Activated B cell treated with CpG ODN at 0.5 μM for 24 hours (primary cell): ENCODE measurements at regions of chr22 and their contacts with region 1.

Region 1: DNA sequence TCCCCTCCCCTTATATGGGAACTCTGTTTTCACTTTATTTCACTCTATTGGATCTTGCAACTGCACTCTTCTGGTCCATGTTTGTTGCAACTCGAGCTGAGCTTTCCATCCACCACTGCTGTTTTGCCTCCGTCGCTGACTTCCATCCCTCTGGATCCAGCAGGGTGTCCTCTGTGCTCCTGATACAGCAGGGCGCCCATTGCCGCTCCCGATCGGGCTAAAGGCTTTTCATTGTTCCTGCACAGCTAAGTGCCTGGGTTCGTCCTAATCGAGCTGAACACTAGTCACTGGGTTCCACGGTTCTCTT is 11.1 kb upstream of the CCDC117 start:
- DNase-seq: no peak
- ATAC-seq: no peak
- H3K4me3 Mint-ChIP-seq: peak overlapping the region; percentile 29
- H3K27ac Mint-ChIP-seq: no peak overlapping the region
- H3K4me1 Mint-ChIP-seq: peaks cover 21% of the 10 kb centered on the region
- H3K27me3 Mint-ChIP-seq: no peaks in the 10 kb centered on the region
- CTCF ChIP-seq: no peak

Region 2: DNA sequence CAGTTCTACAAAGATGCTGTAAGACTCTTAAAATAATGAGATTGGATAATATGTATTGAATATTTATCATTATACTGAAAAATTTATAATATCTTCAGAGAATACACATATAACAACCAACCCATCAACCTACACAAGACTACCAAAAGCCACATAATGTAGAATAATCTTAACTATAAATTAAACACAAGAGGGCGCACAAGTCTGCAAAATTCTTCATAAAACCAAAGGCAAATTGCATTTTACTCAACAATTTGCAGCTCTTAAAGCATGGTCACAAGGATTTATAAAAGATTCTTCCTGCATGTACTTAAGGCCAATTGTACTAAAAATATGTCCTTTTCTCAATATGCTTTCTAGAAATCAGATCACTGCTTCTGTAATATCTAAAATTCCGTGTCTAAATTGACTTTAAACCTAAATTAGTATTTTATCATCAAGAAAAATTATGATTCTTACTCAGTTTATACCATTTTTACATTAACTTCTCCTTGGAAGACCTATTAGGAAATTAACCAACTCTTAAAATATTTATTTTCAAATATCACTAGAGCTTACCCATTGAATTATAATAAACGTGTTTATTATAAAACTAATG is 160.8 kb before region 1 on chr22:
- CTCF ChIA-PET with region 1: no interaction called
- POLR2A ChIA-PET with region 1: interaction called, 13 read pairs
- intact Hi-C with region 1: no loop called
- DNase-seq: no peak
- ATAC-seq: no peak
- H3K4me3 Mint-ChIP-seq: no peak overlapping the region
- H3K27ac Mint-ChIP-seq: no peak overlapping the region
- H3K4me1 Mint-ChIP-seq: no peaks in the 10 kb centered on the region
- H3K27me3 Mint-ChIP-seq: peaks cover 5% of the 10 kb centered on the region
- CTCF ChIP-seq: peak; percentile 34